T-cell (primary cell): ENCODE measurements at regions of chr6 and their contacts with region 1.

Region 1: GRCh38 chr6:53179961-53180651 is 31.5 kb upstream of the GCM1 start:
- DNase-seq: peak in 34 of 35 experiments; percentile 7 to 69 (median 43)
- ATAC-seq: peak; percentile 40 to 90 (median 54)
- H3K4me3 ChIP-seq: no peak overlapping the region
- H3K4me3 Mint-ChIP-seq: peak overlapping the region in 1 of 3 donors; percentile 47
- H3K27ac ChIP-seq: no peak overlapping the region
- H3K27ac Mint-ChIP-seq: peak overlapping the region; percentile 89 to 92
- H3K4me1 ChIP-seq: peaks cover 0 to 6% of the 10 kb centered on the region in 2 experiments
- H3K4me1 Mint-ChIP-seq: peaks cover 12 to 22% (median 22%) of the 10 kb centered on the region in 3 donors
- H3K27me3 ChIP-seq: no peaks in the 10 kb centered on the region
- H3K27me3 Mint-ChIP-seq: no peaks in the 10 kb centered on the region

Region 2: DNA sequence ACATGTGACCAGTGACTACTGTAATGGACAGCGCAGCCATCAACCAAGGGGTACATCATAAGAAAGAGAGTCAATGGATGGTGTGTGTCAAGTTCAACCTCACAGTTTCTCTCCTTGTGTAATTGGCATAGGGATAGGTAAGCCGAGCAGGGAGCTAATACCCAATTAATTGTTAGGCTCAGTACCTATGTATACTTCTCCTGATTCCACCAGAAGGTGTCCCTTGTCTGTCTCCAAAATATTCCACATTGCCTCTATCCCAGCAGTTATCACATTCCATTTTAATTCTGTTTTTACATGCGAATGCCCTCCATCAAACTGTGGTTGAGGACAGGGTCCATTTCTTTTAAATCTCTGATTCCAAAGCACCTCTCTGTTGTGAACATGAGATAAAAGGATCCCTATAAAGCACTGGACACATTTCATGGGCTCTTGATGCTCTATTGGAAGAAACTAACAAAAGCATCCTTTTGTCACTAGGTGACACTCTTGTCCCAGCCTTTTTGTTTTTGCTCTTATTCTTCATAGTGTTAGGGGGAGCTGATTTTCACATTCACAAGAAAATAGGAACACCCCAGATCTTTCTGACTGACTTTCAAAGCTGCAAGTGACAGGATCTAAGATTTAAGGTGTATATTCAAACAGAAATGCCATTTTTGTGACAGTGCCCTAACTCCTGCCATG is 76.0 kb before region 1 on chr6:
- CTCF ChIA-PET with region 1: no interaction called
- POLR2A ChIA-PET with region 1: no interaction called
- DNase-seq: peak in 1 of 35 experiments; percentile 3
- ATAC-seq: peak in 1 of 4 experiments; percentile 20
- H3K4me3 ChIP-seq: no peak overlapping the region
- H3K4me3 Mint-ChIP-seq: no peak overlapping the region
- H3K27ac ChIP-seq: no peak overlapping the region
- H3K27ac Mint-ChIP-seq: no peak overlapping the region
- H3K4me1 ChIP-seq: no peaks in the 10 kb centered on the region
- H3K4me1 Mint-ChIP-seq: no peaks in the 10 kb centered on the region
- H3K27me3 ChIP-seq: no peaks in the 10 kb centered on the region
- H3K27me3 Mint-ChIP-seq: no peaks in the 10 kb centered on the region

Region 3: DNA sequence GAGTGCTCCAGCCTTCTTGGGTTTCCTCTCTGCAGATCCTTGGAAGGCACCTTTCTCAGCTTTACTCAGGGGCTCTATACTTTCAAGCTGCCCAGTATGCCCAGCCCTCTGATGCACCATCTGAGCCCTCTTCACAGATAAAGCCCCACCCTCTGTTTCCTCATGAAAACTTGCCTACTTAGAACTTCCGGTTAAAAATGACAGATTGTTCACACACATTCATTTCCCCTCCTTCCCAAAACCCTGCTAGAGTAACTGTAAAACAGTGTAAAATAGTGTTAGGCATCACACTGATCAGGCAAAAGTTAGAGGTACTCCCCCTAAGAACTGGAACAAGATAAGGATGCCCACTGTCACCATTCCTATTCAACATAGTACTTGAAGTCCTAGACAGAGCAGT is 17.5 kb before region 1 on chr6:
- CTCF ChIA-PET with region 1: no interaction called
- POLR2A ChIA-PET with region 1: no interaction called
- DNase-seq: no peak
- ATAC-seq: peak in 1 of 4 experiments; percentile 29
- H3K4me3 ChIP-seq: no peak overlapping the region
- H3K4me3 Mint-ChIP-seq: no peak overlapping the region
- H3K27ac ChIP-seq: no peak overlapping the region
- H3K27ac Mint-ChIP-seq: peak overlapping the region in 1 of 2 donors; percentile 12
- H3K4me1 ChIP-seq: no peaks in the 10 kb centered on the region
- H3K4me1 Mint-ChIP-seq: peaks cover 7 to 12% (median 8%) of the 10 kb centered on the region in 3 donors
- H3K27me3 ChIP-seq: no peaks in the 10 kb centered on the region
- H3K27me3 Mint-ChIP-seq: no peaks in the 10 kb centered on the region

Region 4: DNA sequence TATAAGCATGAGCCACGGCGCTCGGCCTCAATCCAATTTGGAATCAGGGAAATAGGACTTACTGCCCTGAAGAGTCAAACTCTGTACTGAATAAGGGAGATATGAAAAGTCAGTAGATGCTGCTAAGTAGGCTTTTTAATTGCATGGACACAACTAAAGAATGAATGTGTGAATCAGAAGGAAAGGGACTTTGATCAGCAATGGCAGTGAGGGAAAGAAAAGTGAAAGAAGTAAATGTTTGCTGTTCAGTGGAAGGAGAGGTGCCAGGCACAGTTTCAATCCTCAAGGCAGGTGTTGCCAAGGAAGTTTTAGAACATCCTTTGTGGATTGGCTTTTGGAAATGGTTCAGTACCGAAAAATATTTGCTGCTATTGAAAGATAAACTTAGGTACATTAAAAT is 30.7 kb after region 1 on chr6:
- CTCF ChIA-PET with region 1: no interaction called
- POLR2A ChIA-PET with region 1: no interaction called
- DNase-seq: no peak
- ATAC-seq: no peak
- H3K4me3 ChIP-seq: no peak overlapping the region
- H3K4me3 Mint-ChIP-seq: no peak overlapping the region
- H3K27ac ChIP-seq: no peak overlapping the region
- H3K27ac Mint-ChIP-seq: no peak overlapping the region
- H3K4me1 ChIP-seq: no peaks in the 10 kb centered on the region
- H3K4me1 Mint-ChIP-seq: peaks cover 0 to 5% (median 0%) of the 10 kb centered on the region in 3 donors
- H3K27me3 ChIP-seq: no peaks in the 10 kb centered on the region
- H3K27me3 Mint-ChIP-seq: no peaks in the 10 kb centered on the region

Region 5: GRCh38 chr6:53280207-53280606 is 100.1 kb after region 1 on chr6:
- CTCF ChIA-PET with region 1: no interaction called
- POLR2A ChIA-PET with region 1: interaction called in 1 of 2 experiments, 10 read pairs
- DNase-seq: no peak
- ATAC-seq: no peak
- H3K4me3 ChIP-seq: no peak overlapping the region
- H3K4me3 Mint-ChIP-seq: no peak overlapping the region
- H3K27ac ChIP-seq: no peak overlapping the region
- H3K27ac Mint-ChIP-seq: no peak overlapping the region
- H3K4me1 ChIP-seq: peaks cover 2 to 18% of the 10 kb centered on the region in 2 experiments
- H3K4me1 Mint-ChIP-seq: peaks cover 38 to 66% (median 50%) of the 10 kb centered on the region in 3 donors
- H3K27me3 ChIP-seq: no peaks in the 10 kb centered on the region
- H3K27me3 Mint-ChIP-seq: no peaks in the 10 kb centered on the region

Region 6: GRCh38 chr6:53309059-53309900 is 129.2 kb after region 1 on chr6:
- CTCF ChIA-PET with region 1: no interaction called
- POLR2A ChIA-PET with region 1: no interaction called
- DNase-seq: peak in 18 of 35 experiments; percentile 9 to 46 (median 22)
- ATAC-seq: peak; percentile 54 to 80 (median 67)
- H3K4me3 ChIP-seq: no peak overlapping the region
- H3K4me3 Mint-ChIP-seq: peak overlapping the region in 1 of 3 donors; percentile 45
- H3K27ac ChIP-seq: peak overlapping the region; percentile 52
- H3K27ac Mint-ChIP-seq: peak overlapping the region; percentile 88 to 89
- H3K4me1 ChIP-seq: peaks cover 32 to 43% of the 10 kb centered on the region in 2 experiments
- H3K4me1 Mint-ChIP-seq: peaks cover 80 to 83% (median 83%) of the 10 kb centered on the region in 3 donors
- H3K27me3 ChIP-seq: no peaks in the 10 kb centered on the region
- H3K27me3 Mint-ChIP-seq: no peaks in the 10 kb centered on the region